ENCODE measurements at regions of chr3 and their contacts with region 1.

Region 1: DNA sequence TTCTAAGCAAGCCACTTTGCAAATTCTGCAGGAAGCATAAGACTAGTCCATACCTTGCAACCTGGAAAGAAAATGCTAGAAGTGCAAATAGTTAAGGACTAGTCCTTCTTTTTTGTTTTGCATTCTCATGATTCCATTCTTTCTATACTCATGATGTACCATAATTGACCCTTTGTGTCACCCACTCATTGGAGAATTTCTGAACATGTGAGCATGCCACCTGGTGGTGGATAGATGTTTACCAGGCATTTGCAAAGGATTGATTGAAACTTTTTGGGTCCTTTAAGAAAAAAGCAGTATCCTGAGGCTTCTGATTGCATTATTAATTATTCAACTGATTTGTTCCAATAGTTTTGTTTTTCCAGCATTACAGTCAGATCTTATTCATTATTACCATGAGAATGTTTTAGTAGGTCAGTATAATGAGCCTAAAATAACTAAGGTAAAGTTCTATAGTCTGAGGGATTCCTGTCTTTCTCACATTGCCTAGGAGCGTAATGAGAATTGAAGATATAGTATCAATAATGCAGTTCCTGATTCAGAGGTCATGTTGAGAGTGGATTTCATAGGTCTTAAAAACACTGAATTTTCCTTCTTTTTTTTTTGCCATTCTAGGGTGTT is 20.2 kb upstream of the DIPK2A start:
- DNase-seq: no peak
- H3K4me3 ChIP-seq: no peak overlapping the region
- H3K27ac ChIP-seq: no peak overlapping the region
- H3K4me1 ChIP-seq: no peaks in the 10 kb centered on the region
- H3K27me3 ChIP-seq: no peaks in the 10 kb centered on the region
- CTCF ChIP-seq: peak; percentile 48

Region 2: GRCh38 chr3:143644370-143645089 is 306.9 kb before region 1 on chr3:
- intact Hi-C with region 1: no loop called
- DNase-seq: peak; percentile 80
- H3K4me3 ChIP-seq: no peak overlapping the region
- H3K27ac ChIP-seq: no peak overlapping the region
- H3K4me1 ChIP-seq: no peaks in the 10 kb centered on the region
- H3K27me3 ChIP-seq: no peaks in the 10 kb centered on the region
- CTCF ChIP-seq: peak; percentile 55

Region 3: DNA sequence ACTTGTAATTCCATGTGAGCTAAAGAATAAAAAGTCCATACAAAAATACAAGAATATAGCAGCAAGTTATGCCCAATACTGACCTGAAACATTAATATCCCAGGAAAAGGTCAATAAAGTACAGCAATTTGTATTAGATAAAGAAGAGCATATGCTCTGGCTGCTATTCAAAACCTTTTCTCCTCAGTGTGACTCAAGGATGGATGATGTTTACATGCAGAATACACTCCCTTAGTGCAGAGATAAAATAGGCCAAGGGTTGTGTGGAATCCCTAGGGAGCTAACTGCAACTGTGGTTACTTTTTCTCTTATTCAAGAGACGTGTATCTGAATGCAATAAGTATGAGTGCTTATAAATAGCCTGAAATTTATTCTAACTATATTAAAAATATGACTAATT is 181.8 kb before region 1 on chr3:
- intact Hi-C with region 1: loop called (anchors 5 kb)
- DNase-seq: no peak
- H3K4me3 ChIP-seq: no peak overlapping the region
- H3K27ac ChIP-seq: no peak overlapping the region
- H3K4me1 ChIP-seq: no peaks in the 10 kb centered on the region
- H3K27me3 ChIP-seq: no peaks in the 10 kb centered on the region
- CTCF ChIP-seq: no peak